ENCODE measurements at regions of chr6 and their contacts with region 1.

Region 1: GRCh38 chr6:90478789-90479602 is 107.9 kb downstream of the MAP3K7 start:
- DNase-seq: peak; percentile 87
- ATAC-seq: peak; percentile 99

Region 2: DNA sequence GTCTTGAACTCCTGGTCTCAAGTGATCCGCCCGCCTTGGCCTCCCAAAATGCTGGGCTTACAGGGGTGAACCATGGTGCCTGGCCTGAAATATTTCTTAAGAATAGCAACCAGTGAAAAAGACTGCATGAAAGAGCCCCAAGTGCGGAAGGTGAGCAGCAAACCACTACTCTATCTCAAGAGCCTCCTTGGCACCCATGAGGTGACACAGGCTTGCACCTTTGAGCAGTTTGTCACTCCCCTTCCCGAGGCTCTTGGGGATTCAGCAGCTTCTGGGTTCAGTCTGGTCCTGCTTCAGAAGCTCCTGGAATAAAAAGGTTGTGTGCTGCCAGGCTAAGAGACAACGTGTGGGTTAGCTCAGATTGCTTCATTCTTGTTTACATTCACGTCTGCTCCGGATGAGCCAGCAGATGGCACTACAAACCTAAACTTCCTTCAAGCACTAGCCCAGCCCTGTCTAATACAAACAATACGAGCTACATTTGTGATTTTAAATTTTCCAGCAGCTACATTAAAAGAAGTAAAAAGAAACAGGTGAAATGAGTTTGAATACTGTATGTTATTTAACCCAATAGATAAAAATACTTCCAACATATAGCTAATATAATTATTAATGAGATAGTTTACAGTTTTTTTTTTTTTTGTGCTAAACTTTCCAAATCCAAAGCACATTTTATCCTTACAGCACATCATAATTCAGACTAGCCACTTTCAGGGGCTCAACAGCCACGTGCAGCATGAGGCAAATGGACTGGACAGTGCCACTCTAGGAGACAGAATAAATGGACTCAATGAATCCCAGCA is 538.6 kb before region 1 on chr6:
- intact Hi-C with region 1: loop called (anchors 2 kb)
- DNase-seq: peak; percentile 81
- ATAC-seq: peak; percentile 95